ENCODE measurements at regions of chr1 and their contacts with region 1.

Region 1: DNA sequence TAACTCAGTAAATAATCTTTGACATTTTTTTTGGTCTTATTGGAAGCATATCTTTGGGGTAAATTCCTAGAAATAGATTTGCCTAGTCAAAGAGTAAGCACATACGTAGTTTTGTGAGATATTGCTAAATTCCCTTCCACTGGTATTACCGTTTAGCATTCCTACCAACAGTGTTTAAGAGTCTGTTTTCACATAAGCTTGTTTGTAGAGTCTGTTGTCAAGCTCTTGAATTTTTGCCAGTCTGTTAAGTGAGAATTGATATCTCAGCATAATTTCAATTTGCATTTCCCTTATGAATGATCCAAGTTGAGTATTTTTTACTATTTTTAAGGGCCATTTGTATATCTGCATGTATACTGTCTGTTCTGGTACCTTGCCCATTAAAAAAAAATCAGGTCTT is 37.0 kb upstream of the MPC2 start:
- DNase-seq: no peak
- ATAC-seq: no peak
- H3K4me3 ChIP-seq: no peak overlapping the region
- H3K4me3 Mint-ChIP-seq: no peak overlapping the region
- H3K27ac ChIP-seq: no peak overlapping the region
- H3K27ac Mint-ChIP-seq: no peak overlapping the region
- H3K4me1 ChIP-seq: no peaks in the 10 kb centered on the region
- H3K4me1 Mint-ChIP-seq: peaks cover 5% of the 10 kb centered on the region
- H3K27me3 ChIP-seq: no peaks in the 10 kb centered on the region
- H3K27me3 Mint-ChIP-seq: no peaks in the 10 kb centered on the region
- CTCF ChIP-seq: no peak

Region 2: DNA sequence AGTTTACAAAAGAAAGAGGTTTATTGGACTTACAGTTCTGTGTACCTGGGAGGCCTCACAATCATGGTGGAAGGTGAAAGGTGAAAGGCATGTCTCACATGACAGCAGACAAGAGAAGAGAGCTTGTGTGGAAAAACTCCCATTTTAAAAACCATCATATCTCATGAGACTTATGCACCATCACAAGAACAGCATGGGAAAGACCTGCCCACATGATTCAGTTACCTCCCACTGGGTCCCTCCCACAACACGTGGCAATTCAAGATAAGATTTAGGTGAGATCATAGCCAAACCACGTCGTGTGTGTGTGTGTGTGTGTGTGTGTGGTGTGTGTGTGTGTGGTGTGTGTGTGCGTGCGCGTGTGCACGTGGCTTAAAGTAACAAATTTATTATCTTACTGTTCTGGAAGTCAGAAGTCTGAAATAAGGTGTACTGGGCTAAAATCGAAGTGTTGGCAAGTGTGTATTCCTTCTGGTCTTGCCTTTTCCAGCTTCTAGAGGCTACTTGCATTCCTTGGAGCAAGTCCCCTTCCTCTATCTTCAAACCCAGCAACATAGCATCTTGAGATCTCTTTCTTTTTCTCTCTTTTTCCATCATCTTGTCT is 11.2 kb after region 1 on chr1:
- CTCF ChIA-PET with region 1: no interaction called
- POLR2A ChIA-PET with region 1: no interaction called
- intact Hi-C with region 1: loop called in 1 of 2 experiments (anchors 1 kb)
- DNase-seq: peak in 3 of 9 experiments; percentile 6 to 23 (median 18)
- ATAC-seq: no peak
- H3K4me3 ChIP-seq: no peak overlapping the region
- H3K4me3 Mint-ChIP-seq: no peak overlapping the region
- H3K27ac ChIP-seq: no peak overlapping the region
- H3K27ac Mint-ChIP-seq: no peak overlapping the region
- H3K4me1 ChIP-seq: no peaks in the 10 kb centered on the region
- H3K4me1 Mint-ChIP-seq: peaks cover 24% of the 10 kb centered on the region
- H3K27me3 ChIP-seq: no peaks in the 10 kb centered on the region
- H3K27me3 Mint-ChIP-seq: no peaks in the 10 kb centered on the region
- CTCF ChIP-seq: no peak

Measured in CD8-positive, alpha-beta T cell (primary cell).